Left cardiac atrium (tissue), 4 donors: ENCODE measurements at regions of chr4 and their contacts with region 1.

Region 1: GRCh38 chr4:48085821-48086607 is 48.0 kb downstream of the TXK start:
- DNase-seq: no peak
- ATAC-seq: no peak

Region 2: GRCh38 chr4:47926639-47927258 is 159.3 kb before region 1 on chr4:
- intact Hi-C with region 1: loop called in 1 of 2 experiments (anchors 5 kb)
- DNase-seq: peak; percentile 31
- ATAC-seq: peak; percentile 86 to 93

Region 3: DNA sequence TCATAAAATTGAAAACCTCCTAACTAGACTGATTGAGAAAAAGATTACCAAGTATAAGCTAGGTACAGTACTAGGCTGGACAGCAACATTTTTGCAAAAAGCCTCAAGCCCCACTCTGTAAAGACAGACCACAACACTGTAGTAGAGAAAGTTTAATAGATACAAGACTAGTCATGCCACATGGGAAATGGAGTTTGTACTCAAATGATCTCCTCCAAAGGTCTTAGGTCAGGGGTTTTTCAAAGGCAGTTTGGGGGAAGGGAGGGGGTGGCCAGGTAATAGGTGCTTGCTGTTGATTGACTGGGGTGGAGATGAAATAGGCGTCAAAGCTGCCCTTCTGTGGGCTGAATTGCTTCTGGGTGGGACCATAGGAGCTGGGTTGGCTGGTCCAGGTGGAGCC is 83.7 kb before region 1 on chr4:
- intact Hi-C with region 1: loop called in 1 of 2 experiments (anchors 5 kb)
- DNase-seq: no peak
- ATAC-seq: no peak

Region 4: DNA sequence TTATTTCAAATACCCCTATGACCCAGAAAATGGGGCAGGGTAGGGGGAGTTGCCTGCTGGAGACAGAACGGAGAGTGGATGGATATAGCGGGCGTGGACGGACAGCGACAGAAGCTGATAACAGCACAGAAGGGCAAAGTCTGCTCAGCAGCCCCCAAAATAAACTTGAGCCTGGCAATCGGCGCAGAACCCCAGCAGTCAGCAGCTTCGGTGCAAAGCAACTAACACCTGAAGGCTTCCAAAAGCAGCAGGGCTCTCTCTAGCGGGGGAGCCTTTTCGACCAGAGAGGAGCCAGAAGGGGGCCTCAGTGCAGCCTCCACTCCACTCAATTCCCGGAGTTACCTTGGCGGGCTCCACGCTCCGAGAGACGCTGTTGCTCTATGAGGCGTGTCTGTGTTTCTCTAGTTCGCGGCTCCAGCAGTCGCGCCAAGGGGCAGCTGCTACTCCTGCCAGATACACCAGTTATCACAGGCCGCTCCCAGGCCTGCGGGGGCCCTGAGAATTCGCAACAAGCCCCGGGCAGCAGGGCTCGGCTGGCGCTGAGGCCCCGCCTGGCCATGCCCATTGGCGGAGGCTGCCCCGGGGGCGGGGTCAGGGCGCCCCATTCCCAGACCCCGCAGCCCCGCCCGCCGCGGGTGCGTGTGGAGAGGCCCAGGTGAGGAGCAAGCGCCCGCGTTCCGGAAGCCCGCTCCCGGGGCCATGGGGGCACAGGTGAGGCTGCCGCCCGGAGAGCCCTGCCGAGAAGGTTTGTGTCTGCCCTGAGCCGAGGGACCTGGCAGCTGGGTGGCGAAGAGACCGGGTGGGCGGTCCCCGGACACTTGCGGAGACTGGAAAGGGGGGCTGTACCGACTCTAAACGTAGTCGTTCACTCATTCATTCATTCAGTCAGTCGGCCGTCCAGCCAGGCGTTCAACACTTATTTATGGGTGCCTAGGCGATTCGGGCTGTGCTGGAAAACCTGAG is 69.6 kb before region 1 on chr4 and contains the starts of genes CNGA1 and NIPAL1:
- intact Hi-C with region 1: loop called (anchors 5 kb)
- DNase-seq: peak; percentile 85
- ATAC-seq: peak; percentile 97 to 99
- total RNA-seq, gene CNGA1: 0.12 to 0.92 TPM
- total RNA-seq, gene NIPAL1: 0.53 to 1.5 TPM

Region 5: GRCh38 chr4:48565362-48566033 is 479.5 kb after region 1 on chr4:
- intact Hi-C with region 1: no loop called
- DNase-seq: no peak
- ATAC-seq: no peak